RWPE1 (cell line): ENCODE measurements at regions of chr4 and their contacts with region 1.

Region 1: GRCh38 chr4:88033309-88033708 is 25.9 kb downstream of the PKD2 start:
- DNase-seq: peak; percentile 44
- H3K27ac ChIP-seq: no peak overlapping the region
- CTCF ChIP-seq: peak; percentile 64

Region 2: GRCh38 chr4:88196013-88196365 is 162.7 kb after region 1 on chr4:
- CTCF ChIA-PET with region 1: interaction called, 10 read pairs
- POLR2A ChIA-PET with region 1: no interaction called
- DNase-seq: no peak
- H3K27ac ChIP-seq: no peak overlapping the region
- CTCF ChIP-seq: no peak

Region 3: DNA sequence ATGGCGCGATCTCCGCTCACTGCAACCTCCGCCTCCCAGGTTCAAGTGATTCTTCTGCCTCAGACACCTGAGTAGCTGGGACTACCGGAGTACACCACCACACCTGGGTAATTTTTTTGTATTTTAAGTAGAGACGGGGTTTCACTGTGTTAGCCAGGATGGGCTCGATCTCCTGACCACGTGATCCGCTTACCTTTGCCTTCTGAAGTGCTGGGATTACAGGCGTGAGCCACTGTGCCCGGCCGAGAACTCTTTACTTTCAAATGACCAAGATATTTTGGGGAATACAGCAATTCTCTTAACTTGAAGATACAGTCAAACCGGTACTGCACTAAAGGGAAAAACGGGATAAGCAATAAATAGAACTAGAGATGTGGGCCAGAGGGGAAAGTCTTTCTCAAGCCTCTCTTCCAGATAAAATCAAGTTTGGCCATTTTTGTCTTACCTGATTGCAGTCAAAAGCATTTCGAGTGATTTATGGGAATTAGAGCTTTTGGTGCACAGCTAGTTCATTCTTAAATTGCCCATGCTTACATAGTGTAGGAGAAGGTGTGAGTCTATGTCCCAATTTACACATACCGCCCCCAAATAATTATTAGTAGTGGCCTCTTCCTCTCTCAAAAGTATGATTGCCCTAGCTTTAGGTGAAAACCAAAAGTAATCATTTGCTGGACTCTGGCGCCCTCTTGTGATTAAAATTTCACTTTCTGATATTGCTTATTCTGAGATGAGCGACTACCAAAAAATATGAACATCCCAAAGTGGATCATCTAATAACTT is 178.4 kb after region 1 on chr4:
- CTCF ChIA-PET with region 1: interaction called, 47 read pairs
- POLR2A ChIA-PET with region 1: no interaction called
- DNase-seq: peak; percentile 33
- H3K27ac ChIP-seq: no peak overlapping the region
- CTCF ChIP-seq: peak; percentile 70